GM12878 (cell line): ENCODE measurements at regions of chr10 and their contacts with region 1.

Region 1: GRCh38 chr10:70272925-70273316 is 10.9 kb downstream of the NPFFR1 start:
- DNase-seq: peak; percentile 74
- ATAC-seq: peak; percentile 85
- H3K4me3 ChIP-seq: no peak overlapping the region
- H3K27ac ChIP-seq: peak overlapping the region; percentile 40
- H3K4me1 ChIP-seq: peaks cover 31% of the 10 kb centered on the region
- H3K27me3 ChIP-seq: no peaks in the 10 kb centered on the region
- CTCF ChIP-seq: peak; percentile 35 to 75 (median 51); a peak in 5 of 6 replicates
- EP300 ChIP-seq: peak; percentile 40 to 42; a peak in 2 of 4 replicates
- POLR2A ChIP-seq: no peak
- RAD21 ChIP-seq: peak; percentile 45

Region 2: GRCh38 chr10:70233109-70233938 is 39.6 kb before region 1 on chr10 and contains the start of gene PPA1:
- CTCF ChIA-PET with region 1: interaction called, 21 read pairs
- POLR2A ChIA-PET with region 1: interaction called, 5 read pairs
- RAD21 ChIA-PET with region 1: interaction called, 22 read pairs
- SMC1A ChIA-PET with region 1: interaction called, 22 read pairs
- in situ Hi-C with region 1: no loop called
- intact Hi-C with region 1: loop called (anchors 5 kb)
- DNase-seq: peak; percentile 80
- ATAC-seq: peak; percentile 92
- H3K4me3 ChIP-seq: peak within 1 kb of the TSS; percentile 93
- H3K27ac ChIP-seq: peak within 1 kb of the TSS; percentile 76
- H3K4me1 ChIP-seq: no peaks in the 10 kb centered on the region
- H3K27me3 ChIP-seq: no peaks in the 10 kb centered on the region
- CTCF ChIP-seq: peak in 2 of 3 experiments; percentile 20 to 31; a peak in 3 of 6 replicates
- EP300 ChIP-seq: no peak
- POLR2A ChIP-seq: peak; percentile 95
- RAD21 ChIP-seq: no peak
- polyA plus RNA-seq, gene PPA1: 224 to 386 TPM

Region 3: GRCh38 chr10:70283445-70284399 is 10.8 kb after region 1 on chr10 and contains the start of gene NPFFR1:
- CTCF ChIA-PET with region 1: interaction called, 10 read pairs
- POLR2A ChIA-PET with region 1: interaction called, 4 read pairs
- RAD21 ChIA-PET with region 1: interaction called, 4 read pairs
- SMC1A ChIA-PET with region 1: interaction called, 10 read pairs
- in situ Hi-C with region 1: no loop called
- intact Hi-C with region 1: no loop called
- DNase-seq: no peak
- ATAC-seq: peak; percentile 53
- H3K4me3 ChIP-seq: no peak within 1 kb of the TSS
- H3K27ac ChIP-seq: no peak within 1 kb of the TSS
- H3K4me1 ChIP-seq: no peaks in the 10 kb centered on the region
- H3K27me3 ChIP-seq: peaks cover 7 to 12% of the 10 kb centered on the region in 2 experiments
- CTCF ChIP-seq: peak in 1 of 3 experiments; percentile 15; a peak in 1 of 6 replicates
- EP300 ChIP-seq: no peak
- POLR2A ChIP-seq: no peak
- RAD21 ChIP-seq: no peak
- polyA plus RNA-seq, gene NPFFR1: not detected

Region 4: DNA sequence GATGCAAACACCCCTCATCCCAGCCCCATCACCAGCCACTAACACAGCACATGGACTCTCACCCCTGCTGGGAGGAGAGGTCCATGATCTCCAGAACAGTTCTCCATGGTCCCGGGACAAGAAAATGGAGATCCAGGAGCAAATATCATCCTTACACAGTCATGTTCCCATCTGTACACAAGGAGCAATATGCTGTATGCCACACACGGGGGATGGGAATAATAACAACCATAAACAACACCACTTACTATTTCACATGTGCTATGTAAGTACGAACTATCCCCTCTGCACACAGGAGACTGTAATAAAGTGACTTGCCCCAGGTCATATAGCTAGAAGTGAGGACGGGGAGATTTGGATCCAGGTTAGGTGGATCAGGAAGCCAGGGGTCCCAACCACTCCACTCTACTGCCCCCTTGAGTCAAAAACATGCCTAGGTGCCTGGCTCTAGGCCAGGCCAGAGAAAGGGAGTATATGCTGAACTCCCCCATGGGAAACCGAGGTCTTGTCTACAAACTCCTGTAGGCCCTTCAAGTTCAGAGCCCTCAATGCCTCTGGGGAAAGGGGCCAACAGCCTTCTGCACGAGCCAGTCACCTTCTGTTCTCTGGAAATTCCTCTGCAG is 75.4 kb after region 1 on chr10:
- CTCF ChIA-PET with region 1: interaction called, 756 read pairs
- POLR2A ChIA-PET with region 1: interaction called, 4 read pairs
- RAD21 ChIA-PET with region 1: interaction called, 50 read pairs
- SMC1A ChIA-PET with region 1: interaction called, 59 read pairs
- in situ Hi-C with region 1: no loop called
- intact Hi-C with region 1: no loop called
- DNase-seq: no peak
- ATAC-seq: peak; percentile 94
- H3K4me3 ChIP-seq: no peak overlapping the region
- H3K27ac ChIP-seq: no peak overlapping the region
- H3K4me1 ChIP-seq: peaks cover 11% of the 10 kb centered on the region
- H3K27me3 ChIP-seq: no peaks in the 10 kb centered on the region
- CTCF ChIP-seq: peak; percentile 61 to 65 (median 64)
- EP300 ChIP-seq: no peak
- POLR2A ChIP-seq: no peak
- RAD21 ChIP-seq: peak; percentile 68